ENCODE measurements at regions of chr20 and their contacts with region 1.

Region 1: DNA sequence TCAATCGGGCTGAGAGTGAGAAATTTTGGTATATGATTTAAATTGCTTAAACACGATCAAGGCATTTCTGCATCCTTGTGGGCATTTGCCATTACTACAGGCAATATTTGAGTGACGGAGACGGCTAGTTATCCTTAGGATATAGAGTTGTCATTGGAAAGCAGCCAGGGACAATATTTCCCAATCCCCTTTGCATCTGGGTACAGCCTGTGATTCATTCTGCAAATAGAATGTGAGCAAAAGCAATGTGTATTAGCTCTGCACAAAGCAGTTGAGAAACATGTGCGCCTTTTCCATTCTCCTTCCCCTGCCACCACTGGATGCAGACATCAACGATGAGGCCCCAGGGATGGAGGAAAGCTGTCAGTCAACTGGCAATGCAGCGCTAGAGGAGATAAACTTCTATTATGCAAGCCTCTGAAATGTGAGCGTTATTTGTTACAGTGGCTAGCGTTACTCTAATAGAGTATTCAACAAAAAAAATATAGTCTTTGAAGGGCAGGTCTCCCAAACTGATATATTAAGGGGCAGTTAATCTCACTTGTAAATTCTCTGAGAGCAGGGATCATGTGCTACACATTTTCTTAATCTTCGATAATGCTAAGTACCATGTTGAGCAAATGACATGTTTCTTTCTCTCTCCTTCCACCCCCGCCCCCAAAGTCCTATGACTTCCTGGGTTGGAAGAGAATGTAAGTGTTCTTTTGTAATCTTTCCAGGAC is 37.1 kb upstream of the NCOA3 start:
- DNase-seq: peak; percentile 98
- ATAC-seq: peak; percentile 94
- H3K4me3 ChIP-seq: no peak overlapping the region
- H3K27ac ChIP-seq: peak overlapping the region; percentile 58
- H3K4me1 ChIP-seq: peaks cover 21% of the 10 kb centered on the region
- H3K27me3 ChIP-seq: no peaks in the 10 kb centered on the region
- CTCF ChIP-seq: no peak; the same call in 1 of the 2 replicates

Region 2: DNA sequence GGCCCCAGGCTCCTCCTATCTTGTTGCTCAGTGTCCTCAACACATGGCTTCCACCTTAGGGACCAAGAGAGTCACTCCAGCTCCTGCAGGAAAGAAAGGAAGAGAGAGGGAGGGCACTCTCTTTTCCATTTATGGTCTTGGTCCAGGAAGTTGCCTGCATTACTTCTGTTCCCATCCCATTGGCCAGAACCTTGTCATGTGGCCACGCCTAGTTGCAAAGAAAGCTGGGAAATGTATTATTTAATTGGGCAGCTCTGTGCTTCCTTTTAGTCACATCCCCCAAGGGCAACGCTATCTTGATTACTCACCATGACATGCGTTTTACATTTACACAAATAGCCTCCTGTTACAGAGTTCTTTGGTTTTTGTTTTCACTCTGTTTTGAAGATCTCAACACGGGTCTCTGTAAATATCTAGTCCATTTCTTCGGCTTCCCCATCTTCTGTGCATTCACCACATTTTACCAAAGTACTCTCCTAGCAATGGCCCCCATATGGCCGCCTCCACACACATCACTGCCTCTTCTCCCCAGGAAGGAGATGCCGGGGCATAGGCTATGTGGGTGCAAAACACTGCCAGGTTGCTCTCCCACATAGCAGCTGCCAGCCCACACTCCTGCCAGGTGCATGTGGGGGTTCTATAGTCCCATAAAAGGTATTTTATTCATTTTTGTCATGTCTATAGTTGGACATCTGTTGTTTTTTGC is 72.4 kb before region 1 on chr20:
- CTCF ChIA-PET with region 1: no interaction called
- POLR2A ChIA-PET with region 1: no interaction called
- in situ Hi-C with region 1: no loop called
- intact Hi-C with region 1: loop called (anchors 10 kb)
- DNase-seq: no peak
- ATAC-seq: peak; percentile 62
- H3K4me3 ChIP-seq: no peak overlapping the region
- H3K27ac ChIP-seq: peak overlapping the region; percentile 78
- H3K4me1 ChIP-seq: peaks cover 14% of the 10 kb centered on the region
- H3K27me3 ChIP-seq: no peaks in the 10 kb centered on the region
- CTCF ChIP-seq: no peak

Region 3: DNA sequence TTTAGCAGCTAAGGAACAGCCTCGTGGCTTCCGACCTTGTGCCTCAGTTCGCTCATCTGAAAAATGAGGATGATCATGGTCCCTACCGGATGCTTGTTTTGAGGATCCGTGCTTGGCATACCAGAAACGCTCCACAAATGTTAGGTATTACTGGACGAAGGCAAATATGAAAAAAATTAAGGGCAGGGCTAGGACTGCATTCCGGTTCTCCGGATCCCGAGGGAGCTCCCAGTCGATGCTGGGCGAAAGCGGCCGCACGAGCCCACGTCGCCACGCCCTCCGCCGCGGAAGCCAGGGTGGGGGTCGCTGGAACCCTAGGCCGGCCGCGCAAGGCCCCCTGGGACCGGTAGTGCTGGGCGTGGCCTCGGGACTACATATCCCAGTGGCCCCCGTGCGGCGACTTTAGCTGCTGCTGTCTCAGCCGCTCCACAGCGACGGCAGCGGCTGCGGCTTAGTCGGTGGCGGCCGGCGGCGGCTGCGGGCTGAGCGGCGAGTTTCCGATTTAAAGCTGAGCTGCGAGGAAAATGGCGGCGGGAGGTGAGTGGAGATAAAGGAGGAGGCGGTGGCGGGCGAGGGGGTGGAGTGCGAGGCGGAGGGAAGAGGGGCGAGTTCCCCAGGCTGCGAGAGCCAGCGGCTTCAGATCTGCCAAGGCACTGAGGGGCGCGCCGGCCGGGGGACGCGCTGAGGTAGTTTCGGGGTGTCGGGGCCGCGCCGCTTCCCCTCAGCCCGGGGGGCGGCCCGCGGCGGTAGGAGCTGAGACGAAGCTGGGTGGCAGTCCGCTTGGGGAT is 37.1 kb after region 1 on chr20 and contains the start of gene NCOA3:
- CTCF ChIA-PET with region 1: no interaction called
- POLR2A ChIA-PET with region 1: interaction called, 11 read pairs
- in situ Hi-C with region 1: no loop called
- intact Hi-C with region 1: no loop called
- DNase-seq: peak; percentile 71
- ATAC-seq: peak; percentile 99
- H3K4me3 ChIP-seq: peak within 1 kb of the TSS; percentile 73 to 83
- H3K27ac ChIP-seq: peak within 1 kb of the TSS; percentile 98
- H3K4me1 ChIP-seq: peaks cover 27% of the 10 kb centered on the region
- H3K27me3 ChIP-seq: no peaks in the 10 kb centered on the region
- CTCF ChIP-seq: no peak; the same call in 1 of the 2 replicates
- total RNA-seq, gene NCOA3: 47.7 TPM

Region 4: GRCh38 chr20:47586646-47587306 is 122.2 kb after region 1 on chr20:
- CTCF ChIA-PET with region 1: no interaction called
- POLR2A ChIA-PET with region 1: no interaction called
- in situ Hi-C with region 1: no loop called
- intact Hi-C with region 1: no loop called
- DNase-seq: no peak
- ATAC-seq: no peak
- H3K4me3 ChIP-seq: no peak overlapping the region
- H3K27ac ChIP-seq: no peak overlapping the region
- H3K4me1 ChIP-seq: no peaks in the 10 kb centered on the region
- H3K27me3 ChIP-seq: no peaks in the 10 kb centered on the region
- CTCF ChIP-seq: no peak

Region 5: GRCh38 chr20:47809111-47809912 is 344.8 kb after region 1 on chr20:
- CTCF ChIA-PET with region 1: no interaction called
- POLR2A ChIA-PET with region 1: interaction called, 15 read pairs
- in situ Hi-C with region 1: no loop called
- intact Hi-C with region 1: no loop called
- DNase-seq: no peak
- ATAC-seq: no peak
- H3K4me3 ChIP-seq: no peak overlapping the region
- H3K27ac ChIP-seq: no peak overlapping the region
- H3K4me1 ChIP-seq: no peaks in the 10 kb centered on the region
- H3K27me3 ChIP-seq: peaks cover 19% of the 10 kb centered on the region
- CTCF ChIP-seq: no peak

Measured in Panc1 (cell line).